Sigmoid colon (tissue), 7 donors: ENCODE measurements at regions of chr22 and their contacts with region 1.

Region 1: GRCh38 chr22:42717197-42717928 is 3.3 kb downstream of the A4GALT start:
- DNase-seq: no peak
- H3K4me3 ChIP-seq: no peak overlapping the region
- H3K27ac ChIP-seq: peak overlapping the region; percentile 95 to 96 (median 96)
- H3K4me1 ChIP-seq: peaks cover 0 to 55% (median 50%) of the 10 kb centered on the region in 4 donors
- H3K27me3 ChIP-seq: peaks cover 0 to 7% (median 0%) of the 10 kb centered on the region in 3 donors
- CTCF ChIP-seq: no peak
- EP300 ChIP-seq: no peak
- POLR2A ChIP-seq: no peak

Region 2: DNA sequence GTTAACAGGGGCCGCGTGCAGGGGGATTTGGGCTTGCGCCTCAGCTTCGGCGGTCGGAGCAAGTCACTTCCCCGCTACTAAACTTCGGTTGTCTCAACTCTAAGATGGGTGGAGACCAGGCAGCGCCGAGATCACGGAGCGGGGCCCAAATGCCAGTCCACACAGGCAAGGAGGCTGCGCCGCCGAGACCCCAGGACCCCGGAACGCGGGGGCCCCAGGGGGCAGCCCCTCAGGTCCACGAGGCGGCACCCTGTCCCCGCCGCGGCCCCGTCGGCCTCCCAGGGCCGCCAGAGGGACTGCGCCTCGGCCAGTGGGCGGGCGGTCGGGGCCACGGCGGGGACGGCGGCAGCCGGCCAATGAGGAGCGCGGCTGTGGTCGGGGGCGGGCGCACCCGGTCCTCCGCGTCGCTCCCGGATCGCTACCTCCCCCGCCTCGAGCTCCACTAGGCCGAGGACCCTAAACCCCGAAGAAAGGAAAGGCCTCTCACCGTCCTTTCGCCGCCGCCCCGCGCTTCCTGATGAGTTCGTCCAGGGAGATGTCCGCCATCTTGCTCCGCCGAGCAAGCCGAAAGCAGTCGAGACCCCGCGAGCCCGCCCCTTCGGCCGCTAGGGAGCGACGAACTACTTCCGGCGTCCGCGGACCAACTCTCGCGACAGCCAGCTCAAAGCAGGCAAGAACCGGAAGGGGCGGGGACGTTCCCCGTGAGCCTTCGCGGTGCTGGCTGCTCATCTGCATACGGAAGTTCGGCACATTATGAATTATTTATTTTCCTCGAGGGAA is 102.9 kb before region 1 on chr22 and contains the start of gene POLDIP3:
- intact Hi-C with region 1: loop called (anchors 5 kb)
- DNase-seq: peak; percentile 100
- H3K4me3 ChIP-seq: peak within 1 kb of the TSS; percentile 64 to 87 (median 77)
- H3K27ac ChIP-seq: peak within 1 kb of the TSS; percentile 87 to 98 (median 93)
- H3K4me1 ChIP-seq: peaks cover 2 to 68% (median 60%) of the 10 kb centered on the region in 4 donors
- H3K27me3 ChIP-seq: no peaks in the 10 kb centered on the region
- CTCF ChIP-seq: no peak
- EP300 ChIP-seq: peak in 1 of 4 donors; percentile 69
- POLR2A ChIP-seq: peak in 1 of 2 donors; percentile 60
- total RNA-seq, gene POLDIP3: 30.2 to 41.4 (median 34.5) TPM

Region 3: DNA sequence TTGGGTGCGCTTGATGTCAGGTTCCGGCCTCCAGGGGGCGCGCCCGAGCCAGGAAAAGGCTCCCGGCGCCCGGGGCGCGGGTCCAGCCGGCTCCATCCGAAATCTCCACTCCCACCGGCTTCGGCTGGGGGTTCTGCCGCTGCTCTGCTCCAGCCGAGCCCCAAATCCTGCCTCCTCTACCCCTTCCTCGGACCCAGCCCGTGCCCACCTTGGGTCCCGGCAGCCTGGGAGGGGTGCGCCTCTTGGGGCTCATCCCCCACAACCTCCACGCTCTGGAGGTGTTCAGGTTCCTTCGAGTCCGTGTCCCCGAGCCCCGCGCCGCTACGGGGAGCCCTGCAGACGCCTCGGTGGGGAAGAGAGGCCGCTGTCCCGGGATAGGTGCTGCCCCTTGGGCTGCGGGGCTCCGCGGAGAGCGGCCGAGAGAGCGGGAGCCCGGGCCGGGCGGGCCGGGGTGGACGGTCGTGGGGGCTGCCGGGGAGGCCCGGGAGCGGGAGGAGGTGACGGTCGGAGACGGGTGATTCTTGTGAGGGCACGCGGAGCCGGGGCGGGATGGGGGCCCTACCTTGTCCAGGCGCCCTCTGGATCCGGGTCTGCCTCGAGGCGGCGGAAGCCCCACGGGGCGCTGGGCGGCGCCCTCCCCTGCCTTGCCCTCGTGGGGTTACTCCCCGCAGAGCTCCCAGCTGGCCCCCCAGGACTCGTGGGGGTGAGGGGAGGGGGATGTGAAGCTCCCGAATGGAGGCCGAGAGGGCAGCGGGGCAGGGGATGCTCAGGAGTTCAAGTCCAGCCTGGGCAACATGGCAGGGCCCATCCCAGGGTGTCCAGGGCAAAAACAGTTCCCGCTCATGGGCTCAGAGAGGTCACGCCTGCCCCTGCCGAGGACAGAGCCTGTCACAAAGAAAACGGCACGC is 55.0 kb before region 1 on chr22:
- intact Hi-C with region 1: loop called (anchors 1 kb)
- DNase-seq: peak; percentile 86
- H3K4me3 ChIP-seq: peak overlapping the region; percentile 32 to 57 (median 53)
- H3K27ac ChIP-seq: peak overlapping the region; percentile 67 to 82 (median 71)
- H3K4me1 ChIP-seq: peaks cover 0 to 27% (median 16%) of the 10 kb centered on the region in 4 donors
- H3K27me3 ChIP-seq: no peaks in the 10 kb centered on the region
- CTCF ChIP-seq: peak; percentile 42 to 81 (median 64)
- EP300 ChIP-seq: no peak
- POLR2A ChIP-seq: no peak